ENCODE measurements at regions of chrX and their contacts with region 1.

Region 1: GRCh38 chrX:16826207-16826606 is 39.9 kb downstream of the TXLNG start:
- DNase-seq: no peak
- ATAC-seq: peak in 1 of 2 donors; percentile 38
- H3K4me3 ChIP-seq: no peak overlapping the region
- H3K27ac ChIP-seq: peak overlapping the region in 3 of 4 donors; percentile 76 to 78 (median 78)
- H3K4me1 ChIP-seq: peaks cover 13 to 18% of the 10 kb centered on the region in 2 donors
- H3K27me3 ChIP-seq: no peaks in the 10 kb centered on the region
- CTCF ChIP-seq: peak; percentile 30 to 59 (median 56)
- POLR2A ChIP-seq: no peak

Region 2: DNA sequence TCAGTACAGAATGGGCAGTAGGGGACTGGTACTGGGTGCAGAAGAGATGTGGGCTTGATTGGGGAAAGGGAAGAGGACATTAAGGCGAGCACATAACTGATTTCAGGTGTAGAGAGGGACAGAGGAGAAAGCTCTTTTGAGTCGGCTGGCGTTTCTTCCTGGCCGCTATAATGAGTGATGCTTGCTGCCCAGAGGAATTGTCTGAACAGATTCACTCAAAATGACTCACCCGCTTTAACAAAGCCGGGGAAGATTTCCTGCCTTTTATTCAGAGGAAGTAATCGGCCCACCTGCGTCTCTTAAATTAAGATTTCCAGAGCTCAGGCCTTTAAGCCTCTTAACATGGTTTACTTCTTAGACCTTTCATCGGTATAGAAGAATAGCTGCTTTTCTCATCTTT is 869.5 kb before region 1 on chrX:
- in situ Hi-C with region 1: no loop called
- intact Hi-C with region 1: no loop called
- DNase-seq: no peak
- ATAC-seq: no peak
- H3K4me3 ChIP-seq: no peak overlapping the region
- H3K27ac ChIP-seq: no peak overlapping the region
- H3K4me1 ChIP-seq: no peaks in the 10 kb centered on the region
- H3K27me3 ChIP-seq: no peaks in the 10 kb centered on the region
- CTCF ChIP-seq: no peak
- POLR2A ChIP-seq: no peak

Region 3: GRCh38 chrX:16882702-16883486 is 56.7 kb after region 1 on chrX:
- in situ Hi-C with region 1: loop called in 1 of 4 experiments (anchors 10 kb)
- intact Hi-C with region 1: loop called (anchors 2 kb)
- DNase-seq: peak; percentile 33 to 63
- ATAC-seq: peak; percentile 80 to 85
- H3K4me3 ChIP-seq: peak overlapping the region; percentile 45 to 71 (median 51)
- H3K27ac ChIP-seq: peak overlapping the region; percentile 75 to 81 (median 79)
- H3K4me1 ChIP-seq: peaks cover 4 to 8% of the 10 kb centered on the region in 2 donors
- H3K27me3 ChIP-seq: peaks cover 0 to 23% (median 14%) of the 10 kb centered on the region in 3 donors
- CTCF ChIP-seq: peak; percentile 38 to 66 (median 49)
- POLR2A ChIP-seq: peak in 1 of 2 donors; percentile 25

Region 4: GRCh38 chrX:16892504-16893362 is 66.5 kb after region 1 on chrX:
- in situ Hi-C with region 1: loop called in 1 of 4 experiments (anchors 10 kb)
- intact Hi-C with region 1: loop called (anchors 2 kb)
- DNase-seq: peak; percentile 28 to 58
- ATAC-seq: peak; percentile 87 to 90
- H3K4me3 ChIP-seq: no peak overlapping the region
- H3K27ac ChIP-seq: no peak overlapping the region
- H3K4me1 ChIP-seq: no peaks in the 10 kb centered on the region
- H3K27me3 ChIP-seq: peaks cover 0 to 6% (median 4%) of the 10 kb centered on the region in 3 donors
- CTCF ChIP-seq: peak; percentile 34 to 84 (median 69)
- POLR2A ChIP-seq: no peak